ENCODE measurements at regions of chr2 and their contacts with region 1.

Region 1: GRCh38 chr2:218995972-218996711 is 2.9 kb upstream of the CRYBA2 start:
- DNase-seq: peak; percentile 91
- ATAC-seq: peak; percentile 81
- H3K4me3 Mint-ChIP-seq: no peak overlapping the region
- H3K27ac Mint-ChIP-seq: no peak overlapping the region
- H3K4me1 Mint-ChIP-seq: no peaks in the 10 kb centered on the region
- H3K27me3 Mint-ChIP-seq: peaks cover 69% of the 10 kb centered on the region

Region 2: DNA sequence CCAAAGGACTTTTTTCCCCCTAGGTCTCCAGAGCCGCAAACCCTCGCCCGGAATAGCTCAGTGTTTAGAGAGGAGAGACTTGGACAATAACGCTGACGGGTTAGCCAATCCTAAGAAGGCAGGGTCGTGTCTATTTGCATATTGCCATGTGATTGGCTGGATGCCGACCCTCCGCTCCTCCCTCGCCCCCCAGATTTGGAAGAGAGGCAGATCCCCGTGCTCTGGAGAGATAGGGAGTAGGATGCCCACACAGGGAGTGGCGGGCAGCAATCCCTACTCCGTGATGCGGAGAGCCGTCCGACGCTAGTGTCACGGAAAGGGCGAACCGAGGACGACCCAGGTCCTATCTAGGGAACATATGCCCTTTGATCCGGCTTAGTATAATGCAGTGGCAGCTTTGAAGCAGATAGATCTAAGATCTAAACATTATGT is 135.2 kb before region 1 on chr2:
- CTCF ChIA-PET with region 1: no interaction called
- POLR2A ChIA-PET with region 1: interaction called, 10 read pairs
- intact Hi-C with region 1: no loop called
- DNase-seq: no peak
- ATAC-seq: no peak
- H3K4me3 Mint-ChIP-seq: no peak overlapping the region
- H3K27ac Mint-ChIP-seq: no peak overlapping the region
- H3K4me1 Mint-ChIP-seq: peaks cover 15% of the 10 kb centered on the region
- H3K27me3 Mint-ChIP-seq: peaks cover 60% of the 10 kb centered on the region

Region 3: GRCh38 chr2:218876562-218877219 is 119.5 kb before region 1 on chr2:
- CTCF ChIA-PET with region 1: interaction called, 14 read pairs
- POLR2A ChIA-PET with region 1: no interaction called
- intact Hi-C with region 1: loop called in 1 of 2 experiments (anchors 5 kb)
- DNase-seq: peak; percentile 83
- ATAC-seq: no peak
- H3K4me3 Mint-ChIP-seq: no peak overlapping the region
- H3K27ac Mint-ChIP-seq: no peak overlapping the region
- H3K4me1 Mint-ChIP-seq: peaks cover 43% of the 10 kb centered on the region
- H3K27me3 Mint-ChIP-seq: peaks cover 39% of the 10 kb centered on the region

Region 4: GRCh38 chr2:218979846-218980734 is 16.1 kb before region 1 on chr2:
- CTCF ChIA-PET with region 1: interaction called, 70 read pairs
- POLR2A ChIA-PET with region 1: no interaction called
- intact Hi-C with region 1: loop called (anchors 1 to 2 kb)
- DNase-seq: peak; percentile 93
- ATAC-seq: peak; percentile 90
- H3K4me3 Mint-ChIP-seq: peak overlapping the region; percentile 43
- H3K27ac Mint-ChIP-seq: no peak overlapping the region
- H3K4me1 Mint-ChIP-seq: peaks cover 28% of the 10 kb centered on the region
- H3K27me3 Mint-ChIP-seq: peaks cover 56% of the 10 kb centered on the region

Region 5: GRCh38 chr2:219057709-219058540 is 61.8 kb after region 1 on chr2:
- CTCF ChIA-PET with region 1: interaction called, 3 read pairs
- POLR2A ChIA-PET with region 1: no interaction called
- intact Hi-C with region 1: loop called in 1 of 2 experiments (anchors 2 kb)
- DNase-seq: peak; percentile 90
- ATAC-seq: peak; percentile 97
- H3K4me3 Mint-ChIP-seq: no peak overlapping the region
- H3K27ac Mint-ChIP-seq: no peak overlapping the region
- H3K4me1 Mint-ChIP-seq: peaks cover 19% of the 10 kb centered on the region
- H3K27me3 Mint-ChIP-seq: peaks cover 56% of the 10 kb centered on the region

Measured in activated CD4-positive, alpha-beta T cell treated with anti-CD3 and anti-CD28 coated beads for 36 hours (primary cell).